HEK293T (cell line): ENCODE measurements at regions of chr2 and their contacts with region 1.

Region 1: GRCh38 chr2:11753886-11754699 is 7.7 kb downstream of the LPIN1 start:
- DNase-seq: no peak

Region 2: GRCh38 chr2:11175293-11175795 is 578.7 kb before region 1 on chr2:
- CTCF ChIA-PET with region 1: interaction called, 10 read pairs
- POLR2A ChIA-PET with region 1: no interaction called
- DNase-seq: no peak

Region 3: DNA sequence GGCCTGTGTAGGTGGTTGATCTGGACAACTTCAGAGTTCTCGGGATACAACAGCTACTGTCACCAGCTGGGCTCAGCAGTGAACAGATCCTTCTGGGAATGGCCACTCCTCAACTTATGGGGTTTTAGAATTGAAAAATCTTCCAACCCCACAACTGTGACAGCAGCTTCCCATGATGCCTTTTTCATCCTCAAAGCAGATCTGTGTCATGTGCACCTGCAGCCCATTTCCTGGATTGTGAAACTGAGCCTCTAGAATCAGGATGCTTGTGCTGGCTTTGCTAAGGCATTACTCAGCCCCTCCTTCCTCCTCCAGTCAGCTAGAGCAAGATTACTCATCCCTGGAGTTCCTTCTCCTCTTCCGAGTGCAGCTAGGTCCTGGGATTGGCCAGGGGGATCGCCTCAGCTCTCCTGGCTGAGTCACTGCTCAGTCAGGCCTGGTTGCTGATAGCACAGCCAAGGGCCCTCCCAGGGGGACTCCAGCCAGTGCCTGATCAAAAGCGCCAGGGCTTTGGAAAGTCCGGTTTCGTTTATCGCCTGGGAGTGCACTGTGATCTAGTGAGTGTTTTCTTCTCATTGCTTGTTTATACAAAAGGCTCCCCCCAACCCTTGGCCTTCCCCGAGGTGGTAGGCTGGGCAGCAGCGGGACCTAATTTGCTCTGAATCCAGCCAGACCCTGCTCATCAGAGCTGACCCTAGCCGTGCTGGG is 10.1 kb before region 1 on chr2:
- CTCF ChIA-PET with region 1: interaction called, 6 read pairs
- POLR2A ChIA-PET with region 1: interaction called, 10 read pairs
- DNase-seq: peak; percentile 91

Region 4: DNA sequence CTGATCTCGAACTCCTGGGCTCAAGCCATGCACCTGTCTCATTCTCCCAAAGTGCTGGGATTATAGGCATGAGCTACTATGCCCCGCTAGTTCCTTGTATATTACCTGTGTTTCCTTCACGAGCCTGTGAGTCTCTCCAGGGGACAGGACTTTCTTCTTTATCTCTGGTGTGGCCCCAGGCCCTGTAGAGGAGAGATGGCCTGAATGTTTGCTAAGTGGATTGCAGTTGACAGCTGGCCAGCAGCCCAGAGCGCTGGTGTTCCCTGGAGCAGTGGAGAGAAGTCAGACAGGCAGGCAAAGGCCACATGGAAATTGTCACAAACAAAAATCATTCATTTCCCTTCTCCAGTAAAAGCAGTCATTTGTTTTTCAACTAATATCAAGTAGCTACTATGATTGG is 10.3 kb after region 1 on chr2:
- CTCF ChIA-PET with region 1: no interaction called
- POLR2A ChIA-PET with region 1: no interaction called
- DNase-seq: no peak

Region 5: GRCh38 chr2:11799826-11800225 is 45.7 kb after region 1 on chr2:
- CTCF ChIA-PET with region 1: no interaction called
- POLR2A ChIA-PET with region 1: no interaction called
- DNase-seq: no peak